Activated CD4-positive, alpha-beta memory T cell treated with anti-CD3 and anti-CD28 coated beads for 36 hours (primary cell): ENCODE measurements at regions of chr3 and their contacts with region 1.

Region 1: GRCh38 chr3:15768421-15769255 is 29.1 kb downstream of the ANKRD28 start:
- DNase-seq: no peak
- H3K4me3 Mint-ChIP-seq: no peak overlapping the region
- H3K27ac Mint-ChIP-seq: peak overlapping the region; percentile 75
- H3K4me1 Mint-ChIP-seq: peaks cover 36% of the 10 kb centered on the region
- H3K27me3 Mint-ChIP-seq: no peaks in the 10 kb centered on the region

Region 2: DNA sequence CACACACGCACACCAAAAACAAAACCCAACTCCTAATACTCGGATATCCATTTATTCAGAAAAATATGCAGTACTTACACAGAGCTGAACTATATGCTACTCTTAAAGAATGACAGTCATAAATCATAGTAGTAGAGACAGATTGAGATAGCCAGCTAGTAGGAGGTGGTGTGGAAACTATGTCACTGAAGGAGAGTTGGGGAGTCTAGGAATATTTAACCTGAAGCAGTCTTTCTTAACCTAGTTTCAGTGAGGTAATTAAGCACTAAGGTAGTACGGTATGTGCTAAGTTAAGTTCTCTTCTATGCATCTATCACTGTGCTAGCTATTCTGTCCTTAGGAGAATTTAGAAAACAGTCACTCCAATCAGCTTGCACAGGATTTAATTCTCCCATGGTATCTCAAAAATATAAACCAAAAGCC is 25.0 kb before region 1 on chr3:
- CTCF ChIA-PET with region 1: no interaction called
- POLR2A ChIA-PET with region 1: no interaction called
- intact Hi-C with region 1: loop called (anchors 1 kb)
- DNase-seq: no peak
- H3K4me3 Mint-ChIP-seq: no peak overlapping the region
- H3K27ac Mint-ChIP-seq: no peak overlapping the region
- H3K4me1 Mint-ChIP-seq: peaks cover 40% of the 10 kb centered on the region
- H3K27me3 Mint-ChIP-seq: no peaks in the 10 kb centered on the region

Region 3: GRCh38 chr3:15783361-15783969 is 14.8 kb after region 1 on chr3:
- CTCF ChIA-PET with region 1: no interaction called
- POLR2A ChIA-PET with region 1: no interaction called
- intact Hi-C with region 1: no loop called
- DNase-seq: no peak
- H3K4me3 Mint-ChIP-seq: no peak overlapping the region
- H3K27ac Mint-ChIP-seq: no peak overlapping the region
- H3K4me1 Mint-ChIP-seq: peaks cover 27% of the 10 kb centered on the region
- H3K27me3 Mint-ChIP-seq: no peaks in the 10 kb centered on the region